Endothelial cell of umbilical vein (primary cell): ENCODE measurements at regions of chr6 and their contacts with region 1.

Region 1: DNA sequence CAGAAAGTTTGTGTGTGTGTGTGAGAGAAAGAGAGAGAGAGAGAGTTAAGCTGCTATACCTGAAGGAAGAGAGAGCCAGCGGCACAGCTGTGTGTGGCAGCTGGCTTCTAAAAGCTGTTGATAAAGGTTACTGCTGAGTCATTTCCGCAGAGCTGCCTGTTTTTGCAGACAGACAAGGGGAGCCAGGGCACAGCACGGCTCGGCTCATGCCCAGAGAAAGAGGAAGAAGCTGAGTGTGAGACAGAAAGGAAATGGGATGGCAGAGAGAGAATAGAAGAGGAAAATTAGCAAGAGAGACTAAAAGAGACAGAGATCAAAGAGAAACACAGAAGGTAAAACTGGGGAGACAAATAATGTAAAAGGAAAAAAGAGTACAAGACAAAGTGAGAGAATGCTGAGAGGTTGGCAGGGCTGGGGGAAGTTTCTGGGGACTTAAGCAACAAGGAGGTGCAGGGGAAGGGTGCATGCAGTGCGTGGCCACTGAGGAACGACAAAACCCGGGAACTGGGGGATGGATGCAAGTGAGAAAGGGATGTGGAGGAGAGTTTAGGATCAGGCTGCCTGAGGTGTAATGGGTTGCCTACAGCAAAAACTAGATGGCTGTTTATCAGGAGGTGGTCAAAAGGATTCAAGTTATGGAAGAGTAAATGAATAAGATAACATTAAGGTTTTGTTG is 22.7 kb downstream of the HLA-A start:
- DNase-seq: peak; percentile 94
- H3K4me3 ChIP-seq: peak overlapping the region in 2 of 3 experiments; percentile 1 to 67
- H3K27ac ChIP-seq: peak overlapping the region; percentile 94
- H3K4me1 ChIP-seq: peaks cover 44% of the 10 kb centered on the region
- H3K27me3 ChIP-seq: no peaks in the 10 kb centered on the region
- CTCF ChIP-seq: no peak
- POLR2A ChIP-seq: no peak

Region 2: GRCh38 chr6:29593199-29593855 is 371.7 kb before region 1 on chr6:
- CTCF ChIA-PET with region 1: no interaction called
- POLR2A ChIA-PET with region 1: no interaction called
- dilution Hi-C with region 1: no loop called
- intact Hi-C with region 1: no loop called
- DNase-seq: no peak
- H3K4me3 ChIP-seq: no peak overlapping the region
- H3K27ac ChIP-seq: no peak overlapping the region
- H3K4me1 ChIP-seq: no peaks in the 10 kb centered on the region
- H3K27me3 ChIP-seq: peaks cover 0 to 8% of the 10 kb centered on the region in 2 experiments
- CTCF ChIP-seq: no peak
- POLR2A ChIP-seq: no peak

Region 3: DNA sequence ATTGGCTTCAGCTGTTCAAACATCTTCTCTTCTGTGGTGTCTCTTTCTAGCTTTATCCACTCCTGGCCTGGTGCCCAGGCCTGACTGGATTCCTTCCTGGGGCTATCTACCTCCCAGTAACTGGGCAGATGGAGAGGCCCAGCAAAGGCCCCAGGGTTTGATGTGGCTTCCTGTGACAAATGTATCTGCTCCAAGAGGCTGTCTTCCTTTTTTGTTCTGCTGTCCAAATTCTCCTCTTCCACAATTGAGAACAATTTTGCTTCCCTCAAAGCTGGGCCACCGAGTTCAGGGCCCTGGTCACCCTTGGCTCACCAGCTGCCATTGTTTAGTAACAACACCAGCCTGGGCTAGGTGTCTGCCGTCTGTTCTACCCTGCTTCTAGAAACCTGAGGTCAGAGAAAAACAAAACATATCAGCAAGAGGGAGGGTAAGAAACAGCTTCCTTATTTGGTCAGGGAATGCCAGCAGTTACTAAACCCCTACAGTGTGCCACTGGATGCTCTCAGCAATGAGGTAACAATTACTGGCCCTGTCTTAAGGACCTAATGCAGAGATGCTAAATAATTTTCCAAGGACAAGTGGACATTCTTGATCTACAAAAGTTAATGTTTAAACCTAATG is 287.9 kb before region 1 on chr6:
- CTCF ChIA-PET with region 1: no interaction called
- POLR2A ChIA-PET with region 1: no interaction called
- dilution Hi-C with region 1: no loop called
- intact Hi-C with region 1: no loop called
- DNase-seq: no peak
- H3K4me3 ChIP-seq: no peak overlapping the region
- H3K27ac ChIP-seq: no peak overlapping the region
- H3K4me1 ChIP-seq: no peaks in the 10 kb centered on the region
- H3K27me3 ChIP-seq: peaks cover 0 to 2% of the 10 kb centered on the region in 2 experiments
- CTCF ChIP-seq: no peak
- POLR2A ChIP-seq: no peak

Region 4: DNA sequence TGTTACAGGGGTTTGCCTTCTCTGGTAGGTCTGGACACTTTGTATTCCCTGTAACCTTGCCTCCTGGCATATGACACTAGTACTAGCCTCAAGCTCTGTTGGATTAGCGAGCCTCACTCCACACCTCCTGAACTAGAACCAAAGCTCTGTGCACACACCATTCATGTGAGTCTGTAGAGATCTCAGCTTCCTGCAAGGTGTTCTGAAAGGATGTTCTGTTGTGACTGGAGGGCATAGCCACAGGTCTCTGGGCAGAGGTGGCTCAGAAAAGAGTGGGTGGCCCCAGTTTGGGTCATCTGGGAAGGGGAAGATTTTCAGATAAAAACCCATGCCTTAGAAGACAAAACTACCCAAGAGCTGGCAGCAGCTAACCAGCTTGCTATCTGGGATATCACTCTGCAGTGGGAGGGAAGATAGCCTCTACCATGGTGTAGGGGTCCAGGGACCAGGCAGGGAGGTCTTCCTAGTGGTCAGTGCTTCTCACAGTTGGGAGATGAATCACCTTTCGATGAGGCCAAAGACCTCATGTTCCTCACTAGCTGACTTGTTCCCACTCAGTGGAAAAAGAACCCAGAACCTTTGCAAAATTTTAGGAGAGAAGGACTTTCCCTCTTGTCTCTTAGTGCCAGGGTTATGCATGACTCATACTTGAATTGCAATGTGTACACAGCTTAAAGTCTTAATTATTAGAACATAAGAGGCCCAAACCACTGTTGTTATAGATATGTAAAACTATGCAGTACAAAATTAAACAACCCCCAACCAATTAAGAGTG is 200.4 kb before region 1 on chr6:
- CTCF ChIA-PET with region 1: no interaction called
- POLR2A ChIA-PET with region 1: no interaction called
- dilution Hi-C with region 1: no loop called
- intact Hi-C with region 1: no loop called
- DNase-seq: no peak
- H3K4me3 ChIP-seq: no peak overlapping the region
- H3K27ac ChIP-seq: peak overlapping the region; percentile 93
- H3K4me1 ChIP-seq: peaks cover 28% of the 10 kb centered on the region
- H3K27me3 ChIP-seq: peaks cover 0 to 4% of the 10 kb centered on the region in 2 experiments
- CTCF ChIP-seq: no peak
- POLR2A ChIP-seq: no peak

Region 5: GRCh38 chr6:29887819-29888776 is 76.9 kb before region 1 on chr6:
- CTCF ChIA-PET with region 1: no interaction called
- POLR2A ChIA-PET with region 1: no interaction called
- dilution Hi-C with region 1: no loop called
- intact Hi-C with region 1: loop called (anchors 1 kb)
- DNase-seq: peak; percentile 10
- H3K4me3 ChIP-seq: peak overlapping the region; percentile 43 to 53 (median 46)
- H3K27ac ChIP-seq: no peak overlapping the region
- H3K4me1 ChIP-seq: peaks cover 5% of the 10 kb centered on the region
- H3K27me3 ChIP-seq: peaks cover 19 to 23% of the 10 kb centered on the region in 2 experiments
- CTCF ChIP-seq: no peak
- POLR2A ChIP-seq: no peak

Region 6: GRCh38 chr6:29926413-29927274 is 38.4 kb before region 1 on chr6:
- CTCF ChIA-PET with region 1: no interaction called
- POLR2A ChIA-PET with region 1: no interaction called
- dilution Hi-C with region 1: no loop called
- intact Hi-C with region 1: loop called (anchors 2 kb)
- DNase-seq: peak; percentile 47
- H3K4me3 ChIP-seq: peak overlapping the region; percentile 67 to 74 (median 70)
- H3K27ac ChIP-seq: peak overlapping the region; percentile 63
- H3K4me1 ChIP-seq: peaks cover 9% of the 10 kb centered on the region
- H3K27me3 ChIP-seq: peaks cover 0 to 2% of the 10 kb centered on the region in 2 experiments
- CTCF ChIP-seq: no peak
- POLR2A ChIP-seq: no peak

Region 7: GRCh38 chr6:29942275-29943052 is 22.6 kb before region 1 on chr6 and contains the start of gene HLA-A:
- CTCF ChIA-PET with region 1: no interaction called
- POLR2A ChIA-PET with region 1: no interaction called
- dilution Hi-C with region 1: no loop called
- intact Hi-C with region 1: loop called (anchors 1 kb)
- DNase-seq: peak; percentile 97
- H3K4me3 ChIP-seq: peak within 1 kb of the TSS; percentile 52 to 62 (median 55)
- H3K27ac ChIP-seq: peak within 1 kb of the TSS; percentile 67
- H3K4me1 ChIP-seq: no peaks in the 10 kb centered on the region
- H3K27me3 ChIP-seq: peaks cover 0 to 1% of the 10 kb centered on the region in 2 experiments
- CTCF ChIP-seq: no peak
- POLR2A ChIP-seq: peak; percentile 90
- total RNA-seq, gene HLA-A: 153 and 294 TPM in 2 replicates

Region 8: GRCh38 chr6:29953001-29953441 is 12.0 kb before region 1 on chr6:
- CTCF ChIA-PET with region 1: no interaction called
- POLR2A ChIA-PET with region 1: no interaction called
- dilution Hi-C with region 1: no loop called
- intact Hi-C with region 1: loop called (anchors 1 kb)
- DNase-seq: peak; percentile 68
- H3K4me3 ChIP-seq: no peak overlapping the region
- H3K27ac ChIP-seq: no peak overlapping the region
- H3K4me1 ChIP-seq: no peaks in the 10 kb centered on the region
- H3K27me3 ChIP-seq: no peaks in the 10 kb centered on the region
- CTCF ChIP-seq: no peak
- POLR2A ChIP-seq: no peak

Region 9: DNA sequence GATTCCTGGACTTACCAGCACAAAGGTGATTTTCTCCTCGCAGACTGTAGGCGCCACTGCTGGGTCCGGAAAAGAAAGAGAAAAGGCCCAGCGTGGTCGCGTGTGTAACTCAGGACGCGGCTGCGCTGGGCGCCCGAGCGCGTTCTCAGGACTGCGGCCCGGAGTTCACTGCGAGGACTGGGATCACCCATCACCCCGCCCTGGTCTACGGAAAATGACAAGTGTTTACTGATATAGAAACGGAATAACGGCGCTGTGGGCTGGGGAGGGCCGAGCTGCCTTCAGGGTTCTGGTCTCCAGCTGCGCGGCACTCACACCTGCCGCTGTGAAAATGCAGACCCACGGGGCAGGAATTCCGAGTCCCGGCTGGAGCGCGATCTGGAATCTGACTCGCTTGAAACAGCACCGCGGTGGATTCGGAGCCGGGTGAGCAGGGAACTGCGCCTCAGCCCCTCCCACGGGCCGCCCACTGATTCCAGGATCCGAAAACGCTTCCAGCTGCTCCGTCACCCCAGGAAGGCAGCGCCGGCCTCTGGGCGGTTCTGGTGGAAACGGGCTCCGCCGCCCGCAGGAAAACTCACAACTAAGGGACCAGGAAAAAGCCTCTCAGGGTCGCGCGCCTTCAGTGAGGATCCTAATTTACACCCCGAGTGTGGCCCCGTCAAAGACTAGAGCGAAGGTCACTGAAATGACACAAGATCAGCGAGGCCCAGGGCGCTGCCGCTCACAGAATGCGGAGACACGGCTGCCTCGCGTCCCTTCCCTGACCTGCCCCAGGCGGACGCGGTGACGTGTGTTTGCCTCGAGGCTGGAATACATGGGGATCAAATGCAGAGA is 11.8 kb after region 1 on chr6:
- CTCF ChIA-PET with region 1: interaction called, 29 read pairs
- POLR2A ChIA-PET with region 1: no interaction called
- dilution Hi-C with region 1: no loop called
- intact Hi-C with region 1: loop called (anchors 1 kb)
- DNase-seq: peak; percentile 76
- H3K4me3 ChIP-seq: peak overlapping the region; percentile 49 to 56 (median 54)
- H3K27ac ChIP-seq: peak overlapping the region; percentile 35
- H3K4me1 ChIP-seq: peaks cover 12% of the 10 kb centered on the region
- H3K27me3 ChIP-seq: peaks cover 10 to 18% of the 10 kb centered on the region in 2 experiments
- CTCF ChIP-seq: peak in 1 of 2 donors; percentile 18
- POLR2A ChIP-seq: peak; percentile 17

Region 10: DNA sequence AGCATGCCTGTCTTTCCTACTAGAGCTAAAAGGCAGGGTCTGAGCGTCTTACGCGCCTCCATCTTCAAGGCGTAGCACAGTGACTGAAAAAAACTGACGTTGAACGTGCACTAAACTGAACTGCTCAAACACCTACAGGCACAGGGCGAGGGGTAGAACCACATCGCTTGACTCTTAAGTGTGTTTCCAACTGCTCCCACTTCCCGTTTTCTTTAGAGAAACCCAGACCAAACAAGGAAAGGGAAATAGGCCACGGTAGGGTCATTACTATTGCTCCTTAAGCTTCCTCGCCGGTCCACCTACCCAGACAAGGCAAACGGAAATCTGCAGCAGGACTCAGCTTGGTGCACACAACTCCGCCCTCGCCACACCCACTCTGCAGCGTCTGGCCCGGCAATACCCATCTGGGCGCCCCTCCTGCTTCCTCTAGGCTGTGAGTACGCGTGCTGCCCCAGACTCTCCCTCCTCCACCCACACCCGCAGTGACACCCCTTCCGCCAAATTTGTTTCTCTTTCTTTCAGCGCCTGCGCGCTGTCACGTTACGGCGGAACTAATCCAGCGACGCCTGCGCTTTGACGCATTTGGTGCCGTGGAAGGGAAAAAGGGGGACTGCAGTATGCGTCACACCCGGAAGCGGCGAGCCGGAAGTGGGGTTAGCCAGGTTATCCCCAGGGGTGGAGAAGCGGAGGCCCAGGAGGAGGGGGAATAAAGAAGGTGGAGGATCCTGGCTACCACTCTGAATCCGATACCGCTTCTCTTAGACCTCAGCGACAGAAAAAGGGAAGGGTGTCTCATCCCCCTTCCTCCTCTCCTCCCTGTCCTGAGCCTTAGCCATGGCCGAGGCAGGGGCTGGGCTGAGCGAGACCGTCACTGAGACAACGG is 101.8 kb after region 1 on chr6 and contains the start of gene PPP1R11:
- CTCF ChIA-PET with region 1: no interaction called
- POLR2A ChIA-PET with region 1: no interaction called
- dilution Hi-C with region 1: no loop called
- intact Hi-C with region 1: loop called (anchors 5 kb)
- DNase-seq: peak; percentile 100
- H3K4me3 ChIP-seq: peak within 1 kb of the TSS; percentile 47 to 75 (median 51)
- H3K27ac ChIP-seq: peak within 1 kb of the TSS; percentile 91
- H3K4me1 ChIP-seq: peaks cover 22% of the 10 kb centered on the region
- H3K27me3 ChIP-seq: peaks cover 13 to 16% of the 10 kb centered on the region in 2 experiments
- CTCF ChIP-seq: no peak
- POLR2A ChIP-seq: no peak
- total RNA-seq, gene PPP1R11: 32.4 and 37.6 TPM in 2 replicates

Region 11: GRCh38 chr6:30077218-30077617 is 112.2 kb after region 1 on chr6:
- CTCF ChIA-PET with region 1: no interaction called
- POLR2A ChIA-PET with region 1: no interaction called
- dilution Hi-C with region 1: no loop called
- intact Hi-C with region 1: no loop called
- DNase-seq: no peak
- H3K4me3 ChIP-seq: no peak overlapping the region
- H3K27ac ChIP-seq: no peak overlapping the region
- H3K4me1 ChIP-seq: no peaks in the 10 kb centered on the region
- H3K27me3 ChIP-seq: peaks cover 66 to 79% of the 10 kb centered on the region in 2 experiments
- CTCF ChIP-seq: no peak
- POLR2A ChIP-seq: no peak